GM12878 (cell line): ENCODE measurements at regions of chr17 and their contacts with region 1.

Region 1: DNA sequence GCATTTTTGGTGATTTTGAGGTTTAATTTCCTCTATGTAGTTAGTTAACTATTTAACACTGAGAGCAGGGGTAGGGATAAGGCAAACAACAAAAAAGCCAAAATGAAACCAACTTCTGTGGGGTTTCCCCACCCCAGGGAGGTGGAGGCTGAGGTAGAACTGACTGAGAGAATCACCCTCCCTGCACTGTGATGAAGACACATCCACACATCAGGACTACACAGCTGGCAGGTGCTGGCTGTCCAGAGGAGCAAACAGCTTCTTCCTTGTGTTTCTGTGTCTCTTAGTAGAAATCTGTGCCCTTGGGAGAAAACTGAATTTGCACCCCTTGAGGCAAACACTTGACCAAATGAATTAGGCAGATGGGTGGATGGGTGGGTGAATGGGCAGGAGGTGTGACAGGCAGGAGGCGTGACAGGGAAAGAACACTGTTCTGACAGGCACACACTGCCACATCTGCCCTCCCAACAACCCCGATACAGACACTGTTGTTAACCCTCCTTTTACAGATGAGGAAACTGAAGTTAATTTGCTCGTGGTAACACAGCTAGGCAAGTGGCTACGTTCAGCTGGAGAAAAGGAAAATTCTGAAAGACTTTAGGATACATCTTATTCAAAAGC is 62.9 kb upstream of the AMZ2 start:
- DNase-seq: no peak
- ATAC-seq: peak; percentile 74
- H3K4me3 ChIP-seq: peak overlapping the region; percentile 50; the same call in 1 of the 2 replicates
- H3K27ac ChIP-seq: peak overlapping the region; percentile 78
- H3K4me1 ChIP-seq: peaks cover 34% of the 10 kb centered on the region
- H3K27me3 ChIP-seq: no peaks in the 10 kb centered on the region
- CTCF ChIP-seq: no peak
- EP300 ChIP-seq: no peak
- POLR2A ChIP-seq: no peak
- RAD21 ChIP-seq: no peak

Region 2: DNA sequence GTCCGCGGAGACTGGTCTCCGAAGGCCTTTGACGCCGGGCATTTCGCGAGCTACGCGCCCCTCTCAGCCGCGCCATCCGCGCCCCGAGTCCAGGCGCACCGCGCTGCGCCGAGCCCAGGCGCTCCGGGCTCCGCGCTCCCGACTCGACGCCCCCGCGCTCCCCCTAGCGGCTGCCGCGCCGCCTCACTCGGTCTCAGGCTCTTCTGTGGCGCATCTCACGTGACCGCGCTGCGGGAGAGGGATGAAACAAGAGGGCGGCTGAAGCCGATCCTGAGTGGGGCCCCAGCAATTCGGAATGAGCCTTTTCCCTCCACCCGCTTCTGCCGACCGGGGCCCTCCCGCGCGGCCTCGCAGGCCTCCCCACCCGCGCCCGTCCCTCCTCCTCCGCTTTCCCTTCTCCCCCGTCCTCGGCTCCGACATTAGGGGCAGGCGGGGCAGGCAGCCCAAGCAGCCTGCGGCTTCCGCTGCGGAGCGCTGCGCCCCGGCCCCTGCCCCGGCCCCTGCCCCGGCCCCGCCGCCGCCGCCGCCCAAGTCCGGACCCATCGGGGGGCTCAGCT is 20.4 kb after region 1 on chr17:
- CTCF ChIA-PET with region 1: interaction called, 90 read pairs
- POLR2A ChIA-PET with region 1: interaction called, 15 read pairs
- RAD21 ChIA-PET with region 1: interaction called, 23 read pairs
- SMC1A ChIA-PET with region 1: interaction called, 60 read pairs
- in situ Hi-C with region 1: no loop called
- intact Hi-C with region 1: loop called (anchors 2 kb)
- DNase-seq: no peak
- ATAC-seq: peak; percentile 92
- H3K4me3 ChIP-seq: peak overlapping the region; percentile 90
- H3K27ac ChIP-seq: peak overlapping the region; percentile 79
- H3K4me1 ChIP-seq: peaks cover 8% of the 10 kb centered on the region
- H3K27me3 ChIP-seq: 0 out of 4 replicates have a peak, but pooled peaks cover 2 to 4% of the 10 kb centered on the region in 2 experiments
- CTCF ChIP-seq: peak; percentile 85 to 96 (median 92)
- EP300 ChIP-seq: no peak
- POLR2A ChIP-seq: peak; percentile 79
- RAD21 ChIP-seq: peak; percentile 55

Region 3: GRCh38 chr17:68334401-68334800 is 149.5 kb after region 1 on chr17:
- CTCF ChIA-PET with region 1: no interaction called
- POLR2A ChIA-PET with region 1: interaction called, 15 read pairs
- RAD21 ChIA-PET with region 1: no interaction called
- SMC1A ChIA-PET with region 1: interaction called, 3 read pairs
- in situ Hi-C with region 1: no loop called
- intact Hi-C with region 1: no loop called
- DNase-seq: no peak
- ATAC-seq: no peak
- H3K4me3 ChIP-seq: no peak overlapping the region
- H3K27ac ChIP-seq: no peak overlapping the region
- H3K4me1 ChIP-seq: no peaks in the 10 kb centered on the region
- H3K27me3 ChIP-seq: no peaks in the 10 kb centered on the region
- CTCF ChIP-seq: no peak
- EP300 ChIP-seq: no peak
- POLR2A ChIP-seq: no peak
- RAD21 ChIP-seq: no peak

Region 4: DNA sequence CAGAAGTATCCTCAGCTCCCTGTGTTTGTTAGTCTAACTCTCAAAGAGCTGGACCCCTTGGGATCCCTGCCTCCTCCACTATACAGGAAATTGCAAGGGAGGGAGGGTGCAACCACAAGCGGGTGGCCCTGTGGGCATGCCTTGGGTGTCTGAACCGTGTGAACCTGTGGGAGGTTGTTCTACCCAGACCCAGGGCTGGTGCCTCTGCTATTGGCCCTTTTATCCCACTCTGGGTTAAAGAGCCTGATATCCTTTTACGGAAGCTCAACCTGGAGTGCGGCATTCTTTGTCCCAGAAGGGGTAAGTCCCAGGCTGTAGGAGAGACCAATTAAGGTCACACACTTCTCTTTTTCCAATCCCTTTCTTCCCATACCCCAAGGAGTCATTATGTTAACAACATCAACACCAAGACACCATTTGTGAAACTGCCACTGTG is 159.8 kb after region 1 on chr17:
- CTCF ChIA-PET with region 1: no interaction called
- POLR2A ChIA-PET with region 1: no interaction called
- RAD21 ChIA-PET with region 1: no interaction called
- SMC1A ChIA-PET with region 1: no interaction called
- in situ Hi-C with region 1: no loop called
- intact Hi-C with region 1: no loop called
- DNase-seq: no peak
- ATAC-seq: no peak
- H3K4me3 ChIP-seq: no peak overlapping the region
- H3K27ac ChIP-seq: no peak overlapping the region
- H3K4me1 ChIP-seq: peaks cover 11% of the 10 kb centered on the region
- H3K27me3 ChIP-seq: no peaks in the 10 kb centered on the region
- CTCF ChIP-seq: no peak
- EP300 ChIP-seq: no peak
- POLR2A ChIP-seq: no peak
- RAD21 ChIP-seq: no peak